CD14-positive monocyte (primary cell): ENCODE measurements at regions of chr16 and their contacts with region 1.

Region 1: GRCh38 chr16:53022374-53022773 is 30.3 kb downstream of the CHD9NB start:
- DNase-seq: peak in 2 of 3 donors; percentile 2 to 10
- H3K4me3 ChIP-seq: no peak overlapping the region
- H3K4me3 Mint-ChIP-seq: no peak overlapping the region
- H3K27ac ChIP-seq: no peak overlapping the region
- H3K27ac Mint-ChIP-seq: no peak overlapping the region
- H3K4me1 ChIP-seq: no peaks in the 10 kb centered on the region
- H3K4me1 Mint-ChIP-seq: peaks cover 3% of the 10 kb centered on the region
- H3K27me3 ChIP-seq: no peaks in the 10 kb centered on the region
- H3K27me3 Mint-ChIP-seq: peaks cover 5 to 8% (median 8%) of the 10 kb centered on the region in 3 donors
- CTCF ChIP-seq: peak; percentile 34

Region 2: DNA sequence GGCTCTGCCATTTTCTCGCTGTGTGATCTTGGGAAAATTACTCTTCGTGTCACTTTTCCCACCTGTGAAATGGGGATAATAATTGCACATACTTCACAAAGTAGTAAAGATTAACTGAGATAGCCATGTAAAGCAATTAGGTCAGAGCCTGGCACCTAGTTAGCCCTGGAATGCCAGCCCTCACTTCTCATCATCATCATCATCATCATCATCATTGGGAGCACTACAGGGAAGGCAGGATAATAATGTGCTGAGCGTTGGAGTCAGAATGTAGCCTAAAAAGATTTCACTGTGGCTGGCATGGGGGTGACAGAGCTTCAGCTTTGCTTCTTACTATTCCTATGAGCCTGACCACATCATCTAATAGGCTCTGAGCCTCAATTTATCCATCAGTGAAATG is 838.0 kb before region 1 on chr16:
- intact Hi-C with region 1: loop called in 1 of 2 experiments (anchors 10 kb)
- DNase-seq: no peak
- H3K4me3 ChIP-seq: no peak overlapping the region
- H3K4me3 Mint-ChIP-seq: no peak overlapping the region
- H3K27ac ChIP-seq: no peak overlapping the region
- H3K27ac Mint-ChIP-seq: no peak overlapping the region
- H3K4me1 ChIP-seq: no peaks in the 10 kb centered on the region
- H3K4me1 Mint-ChIP-seq: no peaks in the 10 kb centered on the region
- H3K27me3 ChIP-seq: no peaks in the 10 kb centered on the region
- H3K27me3 Mint-ChIP-seq: peaks cover 0 to 2% (median 0%) of the 10 kb centered on the region in 3 donors
- CTCF ChIP-seq: no peak

Region 3: DNA sequence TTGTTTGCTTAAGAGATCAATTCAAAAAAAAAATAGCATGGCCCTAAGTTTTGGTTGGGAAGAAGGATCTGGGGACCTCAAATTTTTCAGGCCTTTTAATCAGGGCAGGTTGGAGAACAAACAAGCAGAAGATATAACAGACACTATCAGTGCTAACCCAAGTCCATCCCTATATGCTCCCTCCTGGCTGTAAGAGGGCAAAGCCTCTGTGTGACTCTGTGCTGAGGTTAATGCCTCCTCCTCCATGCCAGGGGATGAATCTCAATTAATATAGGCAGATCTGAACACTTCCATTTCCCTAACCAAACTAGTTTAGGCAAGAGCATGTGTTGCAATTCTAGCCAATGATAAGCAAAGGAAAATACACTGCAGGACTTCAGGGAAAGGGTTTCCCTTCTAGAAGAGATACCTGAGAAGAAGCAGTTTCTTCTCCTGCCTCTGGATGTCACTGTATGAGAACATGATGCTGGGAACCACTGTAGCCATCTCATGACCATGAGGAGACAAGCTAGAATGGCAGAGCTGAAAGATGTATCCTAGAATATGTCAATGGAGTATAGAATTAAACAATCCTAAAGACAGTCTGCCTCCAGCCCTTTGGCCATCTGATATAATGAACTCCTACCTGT is 45.7 kb before region 1 on chr16:
- intact Hi-C with region 1: no loop called
- DNase-seq: no peak
- H3K4me3 ChIP-seq: no peak overlapping the region
- H3K4me3 Mint-ChIP-seq: no peak overlapping the region
- H3K27ac ChIP-seq: no peak overlapping the region
- H3K27ac Mint-ChIP-seq: no peak overlapping the region
- H3K4me1 ChIP-seq: no peaks in the 10 kb centered on the region
- H3K4me1 Mint-ChIP-seq: no peaks in the 10 kb centered on the region
- H3K27me3 ChIP-seq: no peaks in the 10 kb centered on the region
- H3K27me3 Mint-ChIP-seq: peaks cover 3 to 6% (median 4%) of the 10 kb centered on the region in 3 donors
- CTCF ChIP-seq: no peak